ENCODE measurements at regions of chr1 and their contacts with region 1.

Region 1: DNA sequence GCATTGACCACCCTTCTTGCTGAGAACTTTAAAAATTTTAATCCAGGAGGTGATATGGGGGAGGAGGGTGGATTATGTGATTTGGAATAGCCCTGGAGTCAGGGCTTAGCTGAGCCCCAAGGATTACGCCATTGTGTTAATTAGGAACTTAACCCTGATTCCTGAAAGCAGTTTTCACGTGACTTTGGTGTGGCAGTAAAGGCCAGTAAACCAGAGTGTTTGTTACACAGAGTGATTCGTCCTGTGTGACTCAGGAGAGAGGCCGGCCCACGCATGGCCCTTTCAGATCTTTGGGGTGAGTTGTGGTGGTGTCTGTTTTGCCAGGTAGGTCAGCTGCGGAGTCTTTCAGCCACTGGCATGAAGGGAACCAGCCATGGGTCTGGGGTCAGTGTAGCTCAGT is 107.6 kb downstream of the NOS1AP start:
- DNase-seq: no peak
- H3K4me3 Mint-ChIP-seq: no peak overlapping the region
- H3K27ac Mint-ChIP-seq: no peak overlapping the region
- H3K4me1 Mint-ChIP-seq: peaks cover 14% of the 10 kb centered on the region
- H3K27me3 Mint-ChIP-seq: no peaks in the 10 kb centered on the region
- CTCF ChIP-seq: no peak

Region 2: DNA sequence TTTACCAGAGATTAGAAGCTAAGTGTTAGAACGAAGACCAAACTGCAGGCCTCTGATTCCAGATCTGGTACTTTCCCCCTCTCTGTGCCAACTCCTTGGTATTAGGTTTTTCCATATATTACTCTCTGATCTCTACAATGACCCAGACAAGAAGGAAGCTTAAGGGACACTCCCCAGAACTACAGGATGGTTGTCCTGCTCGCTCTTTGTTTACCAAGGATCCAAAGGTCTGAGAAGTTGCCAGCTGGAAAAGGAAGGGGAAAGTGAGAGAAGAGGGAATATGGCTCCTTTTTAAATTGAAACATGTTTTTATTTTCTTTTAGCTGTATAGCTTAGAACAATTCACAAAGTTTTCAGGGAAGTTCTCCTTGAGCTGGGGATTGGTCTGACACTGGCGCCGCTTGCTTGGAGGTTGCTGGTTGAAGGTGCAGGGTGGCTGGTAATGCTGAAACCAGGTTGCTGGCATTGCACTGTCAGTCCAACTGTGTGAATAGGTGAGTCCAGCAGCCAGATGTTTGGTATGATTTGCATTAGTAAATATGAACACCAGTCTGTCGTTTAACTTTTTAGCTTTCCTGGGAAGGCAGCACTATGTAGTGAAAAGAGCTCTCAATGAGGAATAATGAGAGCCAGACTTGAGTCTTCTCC is 18.4 kb before region 1 on chr1:
- CTCF ChIA-PET with region 1: interaction called, 12 read pairs
- intact Hi-C with region 1: no loop called
- DNase-seq: no peak
- H3K4me3 Mint-ChIP-seq: no peak overlapping the region
- H3K27ac Mint-ChIP-seq: no peak overlapping the region
- H3K4me1 Mint-ChIP-seq: peaks cover 19% of the 10 kb centered on the region
- H3K27me3 Mint-ChIP-seq: no peaks in the 10 kb centered on the region
- CTCF ChIP-seq: no peak

Region 3: DNA sequence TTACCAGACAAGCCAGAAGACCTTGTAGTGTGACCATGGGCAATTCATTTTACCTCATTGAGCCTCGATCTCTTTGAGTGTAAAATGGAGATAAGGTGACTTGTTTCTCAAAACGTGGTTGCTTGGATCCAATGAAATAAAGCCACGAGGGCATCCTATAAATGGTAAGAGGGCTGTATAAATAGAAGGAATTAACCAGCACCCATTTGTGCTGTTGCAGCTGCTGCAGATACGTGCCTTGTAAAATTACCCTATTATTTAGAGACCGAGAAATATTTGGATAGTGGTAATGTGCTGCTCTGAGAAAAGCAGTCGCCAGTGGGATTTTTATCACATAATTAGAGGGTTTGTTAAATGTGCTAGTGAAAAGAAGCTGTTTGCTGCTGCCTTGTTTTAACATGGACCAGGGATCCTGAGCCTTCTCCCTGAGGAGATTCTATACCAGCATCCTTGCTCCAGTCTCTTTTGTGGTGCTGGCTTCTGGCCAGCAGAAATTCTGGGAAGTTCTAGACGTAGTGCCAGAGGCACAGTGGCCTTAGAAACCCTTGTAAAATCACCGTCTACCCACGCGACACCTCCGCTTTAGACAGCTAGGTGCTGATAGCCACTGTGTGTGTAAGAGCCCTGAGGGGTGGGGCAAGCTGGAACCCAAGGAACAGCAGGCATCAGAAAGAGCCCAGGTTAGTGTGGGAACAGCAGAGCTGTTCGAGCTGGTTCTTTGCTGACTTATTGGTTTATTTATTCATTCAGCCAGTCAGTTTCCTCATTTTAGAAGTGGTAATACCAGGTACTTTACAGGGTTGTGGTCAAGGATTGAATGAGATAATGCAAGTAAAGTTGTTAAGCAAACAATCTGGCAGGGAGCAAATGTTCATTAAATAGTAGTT is 29.9 kb after region 1 on chr1:
- CTCF ChIA-PET with region 1: no interaction called
- intact Hi-C with region 1: no loop called
- DNase-seq: peak; percentile 74
- H3K4me3 Mint-ChIP-seq: peak overlapping the region; percentile 53
- H3K27ac Mint-ChIP-seq: peak overlapping the region; percentile 26
- H3K4me1 Mint-ChIP-seq: peaks cover 38% of the 10 kb centered on the region
- H3K27me3 Mint-ChIP-seq: peaks cover 17% of the 10 kb centered on the region
- CTCF ChIP-seq: no peak

Region 4: DNA sequence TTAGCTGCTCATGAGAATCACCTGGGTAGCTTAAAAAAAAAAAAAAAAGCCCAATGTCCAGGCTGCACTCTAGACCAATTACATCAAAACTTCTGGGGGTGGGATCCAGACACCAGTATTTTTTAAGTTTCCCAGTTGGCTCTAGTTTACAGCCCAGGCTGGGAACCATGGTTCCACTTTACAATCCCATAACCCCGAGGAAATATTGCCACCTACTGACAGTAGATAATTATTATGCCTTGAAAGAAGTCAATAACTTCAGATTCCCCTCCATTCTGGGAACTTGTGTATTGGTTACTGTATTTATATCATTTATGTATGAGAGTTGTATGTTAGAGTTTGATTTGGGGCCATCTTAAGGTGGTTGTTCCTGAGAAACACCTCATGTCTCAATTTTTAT is 99.4 kb after region 1 on chr1:
- CTCF ChIA-PET with region 1: no interaction called
- intact Hi-C with region 1: no loop called
- DNase-seq: peak; percentile 32
- H3K4me3 Mint-ChIP-seq: no peak overlapping the region
- H3K27ac Mint-ChIP-seq: no peak overlapping the region
- H3K4me1 Mint-ChIP-seq: peaks cover 8% of the 10 kb centered on the region
- H3K27me3 Mint-ChIP-seq: no peaks in the 10 kb centered on the region
- CTCF ChIP-seq: peak; percentile 56